Activated naive CD4-positive, alpha-beta T cell treated with anti-CD3 and anti-CD28 coated beads, Interleukin-2, amount 10 ng/mL, durations not matched to agents 7 days and 5 days (primary cell): ENCODE measurements at regions of chr1 and their contacts with region 1.

Region 1: GRCh38 chr1:182084487-182085316 is 23.2 kb upstream of the ZNF648 start:
- DNase-seq: peak; percentile 90
- H3K4me3 Mint-ChIP-seq: no peak overlapping the region
- H3K27ac Mint-ChIP-seq: peak overlapping the region; percentile 80
- H3K4me1 Mint-ChIP-seq: peaks cover 56% of the 10 kb centered on the region
- H3K27me3 Mint-ChIP-seq: no peaks in the 10 kb centered on the region

Region 2: GRCh38 chr1:182046763-182047162 is 37.9 kb before region 1 on chr1:
- CTCF ChIA-PET with region 1: interaction called, 33 read pairs
- DNase-seq: no peak
- H3K4me3 Mint-ChIP-seq: peak overlapping the region; percentile 0
- H3K27ac Mint-ChIP-seq: peak overlapping the region; percentile 80
- H3K4me1 Mint-ChIP-seq: peaks cover 43% of the 10 kb centered on the region
- H3K27me3 Mint-ChIP-seq: no peaks in the 10 kb centered on the region

Region 3: GRCh38 chr1:182069028-182069466 is 15.7 kb before region 1 on chr1:
- CTCF ChIA-PET with region 1: interaction called, 20 read pairs
- DNase-seq: peak; percentile 61
- H3K4me3 Mint-ChIP-seq: no peak overlapping the region
- H3K27ac Mint-ChIP-seq: no peak overlapping the region
- H3K4me1 Mint-ChIP-seq: no peaks in the 10 kb centered on the region
- H3K27me3 Mint-ChIP-seq: peaks cover 41% of the 10 kb centered on the region

Region 4: GRCh38 chr1:182301467-182302198 is 216.9 kb after region 1 on chr1:
- CTCF ChIA-PET with region 1: interaction called, 17 read pairs
- DNase-seq: no peak
- H3K4me3 Mint-ChIP-seq: no peak overlapping the region
- H3K27ac Mint-ChIP-seq: no peak overlapping the region
- H3K4me1 Mint-ChIP-seq: peaks cover 18% of the 10 kb centered on the region
- H3K27me3 Mint-ChIP-seq: no peaks in the 10 kb centered on the region

Region 5: DNA sequence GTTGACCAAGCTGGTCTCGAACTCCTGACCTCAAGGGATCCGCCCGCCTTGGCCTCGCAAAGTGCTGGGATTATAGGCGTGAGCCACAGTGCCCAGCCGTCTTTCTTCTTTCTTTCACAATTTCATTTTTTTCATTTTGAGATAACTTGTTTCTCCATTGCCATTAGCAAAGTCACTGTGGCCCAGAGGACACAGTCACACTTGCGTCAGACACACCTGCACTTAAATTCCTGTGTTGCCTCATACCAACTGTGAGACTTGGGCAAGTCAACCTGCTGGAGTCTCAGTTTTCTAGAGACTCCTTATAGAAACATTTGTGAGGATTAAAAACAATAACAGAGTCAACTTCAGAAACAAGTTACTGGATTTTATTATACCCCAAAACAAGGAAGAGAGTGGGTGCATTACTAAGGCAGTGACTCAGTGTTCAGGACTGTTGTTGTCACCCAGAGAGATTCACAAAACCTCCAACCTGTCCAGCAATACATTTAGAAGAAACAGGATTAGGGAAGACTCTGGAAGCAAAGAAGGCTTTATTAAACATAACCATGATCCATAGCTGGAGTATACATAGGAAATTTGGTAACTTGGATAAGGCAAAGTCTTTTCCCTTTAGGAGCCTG is 313.2 kb after region 1 on chr1:
- CTCF ChIA-PET with region 1: interaction called, 167 read pairs
- DNase-seq: no peak
- H3K4me3 Mint-ChIP-seq: no peak overlapping the region
- H3K27ac Mint-ChIP-seq: no peak overlapping the region
- H3K4me1 Mint-ChIP-seq: peaks cover 18% of the 10 kb centered on the region
- H3K27me3 Mint-ChIP-seq: peaks cover 25% of the 10 kb centered on the region